A673 (cell line): ENCODE measurements at regions of chr10 and their contacts with region 1.

Region 1: GRCh38 chr10:95693668-95694534 is at the start of gene TCTN3:
- DNase-seq: peak; percentile 100
- H3K4me3 ChIP-seq: peak within 1 kb of the TSS; percentile 95
- H3K27ac ChIP-seq: peak within 1 kb of the TSS; percentile 92
- H3K4me1 ChIP-seq: peaks cover 10% of the 10 kb centered on the region
- H3K27me3 ChIP-seq: no peaks in the 10 kb centered on the region
- CTCF ChIP-seq: peak; percentile 100
- total RNA-seq, gene TCTN3: 40.2 and 42.5 TPM in 2 replicates

Region 2: DNA sequence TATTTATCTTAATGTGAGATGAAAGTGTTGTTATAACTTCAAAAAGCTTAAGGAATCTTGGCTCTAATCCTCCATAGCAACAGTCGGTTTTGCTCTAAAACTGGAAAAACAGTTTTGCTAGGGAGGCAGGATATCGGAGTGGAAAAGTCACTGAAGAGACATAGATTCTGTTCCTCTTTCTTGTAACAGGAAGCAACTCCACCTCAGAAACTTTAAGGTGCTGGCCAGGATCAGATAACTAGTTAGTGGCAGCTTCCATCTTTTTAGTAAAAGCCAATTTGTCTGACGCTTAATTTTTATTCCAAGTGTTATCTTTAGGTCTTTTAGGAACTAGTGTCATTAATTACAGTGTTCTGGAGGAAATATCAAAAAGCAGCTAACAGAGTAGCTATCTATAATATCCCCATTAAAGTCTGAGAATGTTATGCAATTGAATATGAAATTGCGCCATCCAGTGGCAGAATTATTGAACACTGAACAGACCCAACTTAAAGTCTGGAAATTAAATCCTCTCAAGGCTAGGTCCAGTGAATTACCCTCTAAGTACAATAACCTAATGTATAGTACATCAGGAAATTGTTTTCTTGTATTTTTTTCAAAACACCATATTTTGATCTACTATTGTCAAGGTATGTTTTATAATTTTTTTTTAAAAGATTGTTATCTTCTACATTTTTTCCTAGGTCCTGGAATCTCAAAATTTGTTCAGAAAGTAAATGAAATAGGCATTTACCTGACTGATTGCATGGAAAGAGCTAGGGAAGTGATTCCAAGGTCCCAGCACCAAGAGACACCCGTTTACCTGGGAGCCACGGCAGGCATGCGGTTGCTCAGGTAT is 148.0 kb after region 1 on chr10:
- CTCF ChIA-PET with region 1: interaction called, 84 read pairs
- POLR2A ChIA-PET with region 1: no interaction called
- intact Hi-C with region 1: loop called (anchors 1 kb)
- DNase-seq: peak; percentile 74
- H3K4me3 ChIP-seq: no peak overlapping the region
- H3K27ac ChIP-seq: no peak overlapping the region
- H3K4me1 ChIP-seq: no peaks in the 10 kb centered on the region
- H3K27me3 ChIP-seq: no peaks in the 10 kb centered on the region
- CTCF ChIP-seq: peak; percentile 79

Region 3: GRCh38 chr10:95864906-95865813 is 171.3 kb after region 1 on chr10:
- CTCF ChIA-PET with region 1: interaction called, 11 read pairs
- POLR2A ChIA-PET with region 1: no interaction called
- intact Hi-C with region 1: loop called (anchors 1 kb)
- DNase-seq: peak; percentile 49
- H3K4me3 ChIP-seq: no peak overlapping the region
- H3K27ac ChIP-seq: no peak overlapping the region
- H3K4me1 ChIP-seq: no peaks in the 10 kb centered on the region
- H3K27me3 ChIP-seq: no peaks in the 10 kb centered on the region
- CTCF ChIP-seq: peak; percentile 62

Region 4: DNA sequence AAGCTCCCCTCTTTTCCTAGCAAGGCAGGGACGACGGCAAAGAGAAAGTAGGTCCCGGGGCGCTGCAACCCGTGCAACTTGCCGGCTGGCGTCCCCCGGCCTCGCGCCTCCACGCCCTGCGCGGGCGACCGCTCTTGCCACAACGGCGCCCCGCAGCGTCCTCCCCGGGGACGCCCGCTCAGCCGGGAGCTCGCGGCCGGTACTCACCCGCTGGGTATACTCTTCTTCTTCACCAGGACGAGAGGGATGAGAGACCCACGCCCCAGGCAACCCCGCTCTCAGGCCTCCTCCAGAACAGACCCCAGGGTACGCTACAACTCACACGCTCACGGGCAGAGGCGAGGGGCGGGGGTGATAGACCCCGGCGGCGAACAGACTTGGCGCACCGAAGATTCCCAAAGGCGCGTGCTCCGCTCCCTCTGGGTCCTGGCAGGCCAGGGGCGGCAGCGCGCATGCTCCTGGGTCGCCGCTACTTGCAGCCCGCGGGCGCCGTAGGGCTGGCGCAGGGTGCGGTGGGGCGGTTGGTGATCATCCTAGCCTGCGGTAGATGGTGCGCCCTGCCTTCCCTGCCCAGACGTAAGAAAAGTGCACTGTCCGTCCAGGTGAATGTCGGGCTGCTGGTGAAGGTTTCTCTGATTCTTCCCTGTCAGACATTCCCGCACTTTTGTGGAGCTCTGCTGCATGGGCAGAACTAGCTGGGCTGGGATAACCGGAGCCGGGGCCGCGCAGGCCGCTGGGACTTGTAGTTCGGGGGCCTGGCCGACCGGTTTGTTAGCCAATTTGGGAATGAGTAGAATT is 213.8 kb after region 1 on chr10 and contains the start of gene CC2D2B:
- CTCF ChIA-PET with region 1: interaction called, 5 read pairs
- POLR2A ChIA-PET with region 1: no interaction called
- intact Hi-C with region 1: loop called (anchors 5 kb)
- DNase-seq: peak; percentile 92
- H3K4me3 ChIP-seq: peak within 1 kb of the TSS; percentile 64
- H3K27ac ChIP-seq: peak within 1 kb of the TSS; percentile 76
- H3K4me1 ChIP-seq: no peaks in the 10 kb centered on the region
- H3K27me3 ChIP-seq: peaks cover 8% of the 10 kb centered on the region
- CTCF ChIP-seq: no peak
- total RNA-seq, gene CC2D2B: not detected in 2 replicates

Region 5: DNA sequence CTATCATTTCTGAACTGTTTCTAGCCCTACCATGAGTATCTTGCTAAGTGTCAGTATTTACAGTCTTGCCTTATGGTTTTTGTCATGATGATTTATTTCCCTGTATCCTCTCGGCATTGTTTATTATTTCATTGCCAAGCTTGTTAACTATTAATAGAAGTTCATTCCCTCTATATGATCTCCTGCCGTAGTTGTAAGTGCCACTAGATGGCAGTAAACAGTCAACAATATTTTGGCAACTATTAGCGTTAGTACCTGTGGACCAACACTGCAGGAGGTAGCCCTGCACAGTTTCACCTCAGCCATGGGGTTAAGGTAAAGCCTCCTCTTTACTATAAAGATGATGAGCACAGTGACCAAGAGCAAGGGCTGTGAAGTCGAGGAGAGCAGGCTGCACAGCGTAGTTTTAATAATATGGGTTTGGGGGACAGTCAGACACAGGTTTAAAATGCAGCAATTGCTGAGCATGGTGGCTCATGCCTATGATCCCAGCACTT is 323.3 kb after region 1 on chr10:
- CTCF ChIA-PET with region 1: interaction called, 4 read pairs
- POLR2A ChIA-PET with region 1: no interaction called
- intact Hi-C with region 1: loop called (anchors 1 kb)
- DNase-seq: peak; percentile 58
- H3K4me3 ChIP-seq: no peak overlapping the region
- H3K27ac ChIP-seq: no peak overlapping the region
- H3K4me1 ChIP-seq: no peaks in the 10 kb centered on the region
- H3K27me3 ChIP-seq: no peaks in the 10 kb centered on the region
- CTCF ChIP-seq: peak; percentile 80